Posterior vena cava (tissue), 2 donors: ENCODE measurements at regions of chr19 and their contacts with region 1.

Region 1: GRCh38 chr19:18328340-18329034 is 5.6 kb upstream of the LSM4 start:
- DNase-seq: peak; percentile 95

Region 2: GRCh38 chr19:18194554-18195238 is 133.8 kb before region 1 on chr19:
- intact Hi-C with region 1: loop called in 1 of 2 experiments (anchors 5 kb)
- DNase-seq: peak; percentile 84

Region 3: GRCh38 chr19:18379803-18380747 is 51.6 kb after region 1 on chr19:
- intact Hi-C with region 1: no loop called
- DNase-seq: peak; percentile 97